MCF 10A (cell line): ENCODE measurements at regions of chr4 and their contacts with region 1.

Region 1: GRCh38 chr4:123661080-123661737 is 264.6 kb downstream of the SPRY1 start:
- DNase-seq: peak; percentile 39
- H3K4me3 Mint-ChIP-seq: no peak overlapping the region
- H3K27ac Mint-ChIP-seq: no peak overlapping the region
- H3K4me1 Mint-ChIP-seq: no peaks in the 10 kb centered on the region
- H3K27me3 Mint-ChIP-seq: no peaks in the 10 kb centered on the region
- CTCF ChIP-seq: peak; percentile 46

Region 2: GRCh38 chr4:123127218-123127617 is 534.0 kb before region 1 on chr4:
- CTCF ChIA-PET with region 1: interaction called, 44 read pairs
- POLR2A ChIA-PET with region 1: interaction called, 3 read pairs
- intact Hi-C with region 1: loop called (anchors 1 kb)
- DNase-seq: peak; percentile 16
- H3K4me3 Mint-ChIP-seq: no peak overlapping the region
- H3K27ac Mint-ChIP-seq: no peak overlapping the region
- H3K4me1 Mint-ChIP-seq: no peaks in the 10 kb centered on the region
- H3K27me3 Mint-ChIP-seq: no peaks in the 10 kb centered on the region
- CTCF ChIP-seq: peak; percentile 42

Region 3: GRCh38 chr4:123390846-123391456 is 270.3 kb before region 1 on chr4:
- CTCF ChIA-PET with region 1: interaction called, 15 read pairs
- POLR2A ChIA-PET with region 1: no interaction called
- intact Hi-C with region 1: loop called (anchors 2 kb)
- DNase-seq: peak; percentile 35
- H3K4me3 Mint-ChIP-seq: no peak overlapping the region
- H3K27ac Mint-ChIP-seq: no peak overlapping the region
- H3K4me1 Mint-ChIP-seq: peaks cover 10% of the 10 kb centered on the region
- H3K27me3 Mint-ChIP-seq: no peaks in the 10 kb centered on the region
- CTCF ChIP-seq: peak; percentile 33

Region 4: GRCh38 chr4:123649645-123650391 is 11.4 kb before region 1 on chr4:
- CTCF ChIA-PET with region 1: interaction called, 13 read pairs
- POLR2A ChIA-PET with region 1: no interaction called
- intact Hi-C with region 1: no loop called
- DNase-seq: peak; percentile 63
- H3K4me3 Mint-ChIP-seq: no peak overlapping the region
- H3K27ac Mint-ChIP-seq: peak overlapping the region; percentile 95
- H3K4me1 Mint-ChIP-seq: peaks cover 11% of the 10 kb centered on the region
- H3K27me3 Mint-ChIP-seq: no peaks in the 10 kb centered on the region
- CTCF ChIP-seq: no peak

Region 5: DNA sequence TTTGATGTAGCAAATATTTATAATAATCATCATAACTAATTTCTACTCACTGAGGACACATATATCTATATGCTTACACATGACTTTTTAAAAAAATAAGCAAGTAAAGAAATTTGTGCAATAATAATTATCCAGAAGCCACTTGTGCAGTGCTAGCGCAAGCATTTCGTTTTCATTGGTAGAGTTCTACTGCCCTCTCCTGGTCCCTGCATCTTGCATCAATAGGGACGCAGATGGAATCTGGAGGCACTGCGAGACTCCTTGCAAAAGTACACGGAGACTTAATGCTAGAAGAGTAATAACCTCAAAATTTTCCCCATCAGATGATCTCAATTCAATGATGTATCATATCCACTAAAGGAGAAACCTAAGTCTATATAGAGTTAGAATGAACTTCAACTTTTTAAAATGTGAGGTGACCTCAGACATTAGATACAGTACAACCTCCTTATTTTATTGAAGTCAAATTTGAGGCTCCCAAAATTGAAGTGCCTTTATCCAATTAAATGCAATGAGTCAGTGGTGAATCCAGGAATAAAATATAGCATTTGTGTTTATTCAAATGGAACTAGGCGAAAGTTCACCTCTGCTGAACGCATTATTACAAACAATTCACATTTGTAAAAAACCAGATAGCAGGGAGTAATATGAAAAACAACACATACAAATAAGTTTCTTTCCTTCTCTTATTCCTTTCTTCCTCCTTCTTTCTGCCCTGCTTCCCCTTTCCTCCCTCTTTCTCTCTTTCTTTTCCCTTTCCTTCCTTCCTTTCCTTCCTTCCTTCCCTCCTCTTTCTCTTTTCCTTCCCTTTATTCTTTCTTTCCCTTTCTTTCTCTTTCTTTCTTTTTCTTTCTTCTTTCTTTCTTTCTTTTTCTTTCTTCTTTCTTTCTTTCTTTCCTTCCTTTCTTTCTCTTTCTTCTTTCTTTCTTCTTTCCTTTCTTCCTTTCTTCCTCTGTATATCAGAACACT is 601.3 kb after region 1 on chr4:
- CTCF ChIA-PET with region 1: interaction called, 3 read pairs
- POLR2A ChIA-PET with region 1: no interaction called
- intact Hi-C with region 1: loop called (anchors 5 kb)
- DNase-seq: peak; percentile 87
- H3K4me3 Mint-ChIP-seq: no peak overlapping the region
- H3K27ac Mint-ChIP-seq: no peak overlapping the region
- H3K4me1 Mint-ChIP-seq: peaks cover 5% of the 10 kb centered on the region
- H3K27me3 Mint-ChIP-seq: no peaks in the 10 kb centered on the region
- CTCF ChIP-seq: peak; percentile 77